GM10248 (cell line): ENCODE measurements at regions of chr2 and their contacts with region 1.

Region 1: DNA sequence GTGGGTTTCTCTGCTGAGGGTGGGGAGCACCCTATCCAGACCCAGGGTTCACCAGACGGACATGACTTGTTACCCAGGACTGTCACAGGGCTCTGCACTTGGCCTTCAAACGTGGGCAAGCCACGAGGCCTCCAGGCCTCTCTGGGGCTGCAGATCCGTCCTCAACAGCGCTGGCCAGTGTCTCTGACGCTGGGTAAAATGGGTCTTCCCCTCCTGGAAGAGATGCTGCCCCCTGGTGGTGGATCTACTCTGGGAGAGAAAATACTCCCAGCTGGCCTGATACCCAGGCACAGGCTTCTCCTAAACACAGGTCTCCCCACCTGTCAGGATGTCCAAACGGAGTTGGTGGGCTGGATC is 3.7 kb downstream of the GPR17 start:
- DNase-seq: peak; percentile 87
- CTCF ChIP-seq: peak; percentile 69

Region 2: DNA sequence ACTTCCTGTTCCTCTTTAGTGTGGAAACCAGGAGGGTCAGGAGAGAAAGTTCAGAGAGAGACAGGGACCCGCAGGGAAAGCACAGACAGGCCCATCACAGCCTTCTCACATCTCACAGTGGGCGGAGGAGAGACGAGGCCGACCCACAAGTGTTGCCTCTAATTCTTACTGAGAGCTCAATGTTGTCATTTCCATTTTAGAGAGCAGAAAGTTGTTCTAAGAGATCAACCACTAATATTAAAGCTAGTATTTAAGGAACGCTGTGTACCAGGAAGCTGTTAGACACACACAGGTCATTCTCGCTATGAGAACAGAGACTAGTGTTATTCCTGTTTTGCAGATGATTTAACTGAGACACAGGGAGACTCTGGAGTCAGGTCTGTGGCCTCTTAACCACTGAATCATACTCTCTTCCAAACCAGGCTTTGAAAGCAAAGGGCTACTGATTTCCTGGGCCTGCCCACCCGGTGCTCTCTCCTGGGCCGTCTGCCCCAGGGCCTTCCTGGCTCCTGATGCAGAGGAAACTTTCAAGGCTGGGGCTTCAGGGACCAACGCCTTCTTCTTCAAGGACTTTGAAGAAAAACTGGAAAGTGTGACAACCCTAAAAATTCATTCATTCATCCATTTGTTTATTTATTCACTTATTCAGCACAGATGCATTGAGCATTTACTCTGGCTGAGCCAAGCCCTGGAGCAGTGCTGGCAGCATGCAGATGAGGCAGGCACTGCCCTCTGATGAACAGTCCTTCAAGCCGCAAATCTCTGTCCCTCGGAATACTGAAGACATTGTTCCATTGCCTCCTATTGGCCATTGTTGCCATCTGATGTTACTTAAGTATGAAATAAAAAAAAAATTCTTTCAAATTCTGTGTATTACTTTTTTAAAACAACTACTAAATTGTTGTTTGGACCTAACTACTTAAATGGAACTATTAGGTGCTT is 505.6 kb before region 1 on chr2:
- CTCF ChIA-PET with region 1: no interaction called
- POLR2A ChIA-PET with region 1: no interaction called
- DNase-seq: no peak
- CTCF ChIP-seq: no peak

Region 3: DNA sequence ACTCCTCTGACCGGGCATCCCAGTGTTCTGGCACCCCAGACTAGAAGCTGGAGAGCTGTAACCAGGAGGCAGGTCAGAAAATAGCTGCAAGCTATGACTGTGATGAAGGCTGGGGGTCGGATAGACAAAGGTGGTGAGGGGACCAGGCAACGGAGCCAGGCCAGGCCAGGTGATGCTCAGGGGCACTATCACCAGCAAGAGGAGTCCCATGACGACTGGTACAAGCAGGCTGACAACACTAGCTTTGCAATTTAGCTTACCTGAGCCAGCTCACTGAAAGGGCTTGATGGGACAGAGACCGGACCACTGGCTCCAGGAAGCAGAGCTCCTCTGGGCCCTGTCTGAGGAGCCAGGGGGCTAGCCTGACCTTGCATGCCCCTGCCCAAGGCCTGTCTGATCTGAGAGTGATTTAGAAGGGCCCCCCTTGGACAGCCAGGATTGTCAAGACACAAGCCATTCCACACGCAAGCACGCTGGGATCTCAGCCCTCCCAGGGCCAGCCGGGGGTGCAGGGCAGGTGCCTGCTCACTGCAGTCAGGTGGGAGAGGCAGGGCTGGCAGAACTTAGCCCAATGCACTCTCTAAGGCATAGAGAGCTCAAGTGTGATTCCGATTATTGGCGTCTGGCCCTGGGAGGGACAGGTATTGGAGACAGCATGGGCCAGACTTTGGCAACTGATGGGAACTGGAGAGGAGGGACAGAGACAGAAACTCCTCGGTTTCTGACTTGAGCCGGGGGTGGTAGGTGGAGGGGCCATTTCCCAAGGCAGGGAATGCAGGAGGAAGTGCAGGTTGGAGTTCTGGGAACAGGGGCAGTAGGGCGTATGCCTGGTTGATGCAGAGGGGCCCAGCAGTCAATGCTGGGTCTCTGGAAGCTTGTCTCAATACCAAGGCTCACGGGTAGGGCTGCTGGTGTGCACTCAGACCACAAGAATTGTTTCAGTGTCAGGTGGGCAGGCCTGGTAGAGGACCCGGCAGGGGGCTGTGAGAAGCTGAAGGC is 66.5 kb before region 1 on chr2:
- CTCF ChIA-PET with region 1: interaction called, 13 read pairs
- POLR2A ChIA-PET with region 1: no interaction called
- DNase-seq: no peak
- CTCF ChIP-seq: no peak

Region 4: DNA sequence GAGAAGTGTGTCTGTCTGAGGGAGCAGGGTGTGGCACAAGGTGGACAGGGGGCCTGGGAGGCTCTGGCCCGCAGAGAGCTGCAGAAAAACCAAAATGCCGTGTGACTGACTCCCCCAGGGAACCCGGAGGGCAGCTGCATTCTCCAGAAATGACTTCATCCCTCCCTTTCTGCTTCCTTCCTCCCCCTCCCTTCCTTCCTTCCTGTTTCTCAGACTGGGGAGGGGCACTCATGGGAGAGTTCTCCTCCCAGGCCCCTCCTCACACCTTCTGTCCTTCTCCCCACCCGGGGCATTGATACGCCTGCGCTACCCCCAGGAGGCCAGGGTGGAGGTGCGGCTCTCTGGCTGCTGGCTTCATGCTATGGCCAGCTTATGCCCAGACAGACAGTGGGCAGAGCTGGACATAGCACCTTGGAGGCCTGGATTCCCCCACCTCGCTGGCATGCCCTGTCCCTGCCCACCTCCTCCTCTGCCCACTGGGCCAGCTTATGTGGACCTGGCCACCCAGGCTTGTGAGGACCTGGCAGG is 11.9 kb before region 1 on chr2:
- CTCF ChIA-PET with region 1: interaction called, 18 read pairs
- POLR2A ChIA-PET with region 1: no interaction called
- DNase-seq: no peak
- CTCF ChIP-seq: no peak

Region 5: DNA sequence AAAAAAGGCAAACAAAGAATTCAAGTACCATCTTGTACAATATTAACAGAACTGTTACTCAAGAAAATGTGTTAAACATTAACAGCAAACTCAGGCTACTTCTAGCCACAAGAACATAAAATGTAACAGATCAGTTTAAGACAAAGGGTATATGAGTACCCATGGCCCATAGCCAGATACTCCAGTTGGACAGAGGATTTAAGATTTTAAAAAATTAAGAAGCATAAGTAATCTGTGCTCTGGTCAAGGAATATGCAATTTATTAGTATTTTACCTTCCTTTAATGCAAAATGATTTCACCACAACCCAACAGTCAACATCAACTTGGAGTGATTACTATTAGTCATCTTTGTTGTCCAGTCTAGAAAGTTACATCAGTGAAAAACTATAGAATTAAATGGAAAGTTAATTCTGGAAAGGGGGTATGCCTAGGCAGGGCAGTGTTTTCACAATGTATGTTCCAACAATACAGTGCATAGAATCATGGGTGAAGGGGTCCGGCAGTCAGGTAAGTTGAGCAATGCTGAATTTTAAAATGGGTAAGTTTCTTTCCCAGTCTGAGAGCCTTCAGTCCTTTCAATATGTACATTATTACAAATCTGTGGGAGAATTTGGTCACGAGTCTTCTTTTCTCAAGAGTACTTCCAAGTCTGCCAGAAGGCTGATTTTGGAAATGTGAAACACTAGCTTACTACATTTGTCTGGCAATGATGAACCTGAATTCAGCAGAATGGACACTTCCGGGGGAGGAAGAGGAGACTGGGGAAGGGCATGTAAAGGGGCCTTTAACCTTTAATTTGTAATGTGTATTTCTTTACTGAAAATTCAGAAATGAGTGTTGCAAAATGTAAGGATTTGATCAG is 86.1 kb after region 1 on chr2:
- CTCF ChIA-PET with region 1: no interaction called
- POLR2A ChIA-PET with region 1: no interaction called
- DNase-seq: no peak
- CTCF ChIP-seq: no peak